Activated CD4-positive, alpha-beta memory T cell treated with anti-CD3 and anti-CD28 coated beads for 36 hours (primary cell): ENCODE measurements at regions of chr19 and their contacts with region 1.

Region 1: GRCh38 chr19:5987077-5987818 is 9.3 kb upstream of the RANBP3 start:
- DNase-seq: peak; percentile 82
- H3K4me3 Mint-ChIP-seq: peak overlapping the region; percentile 67
- H3K27ac Mint-ChIP-seq: no peak overlapping the region
- H3K4me1 Mint-ChIP-seq: peaks cover 30% of the 10 kb centered on the region
- H3K27me3 Mint-ChIP-seq: no peaks in the 10 kb centered on the region

Region 2: GRCh38 chr19:6000228-6000847 is 13.1 kb after region 1 on chr19:
- CTCF ChIA-PET with region 1: interaction called, 18 read pairs
- POLR2A ChIA-PET with region 1: no interaction called
- intact Hi-C with region 1: no loop called
- DNase-seq: no peak
- H3K4me3 Mint-ChIP-seq: no peak overlapping the region
- H3K27ac Mint-ChIP-seq: no peak overlapping the region
- H3K4me1 Mint-ChIP-seq: no peaks in the 10 kb centered on the region
- H3K27me3 Mint-ChIP-seq: no peaks in the 10 kb centered on the region

Region 3: GRCh38 chr19:6021878-6022569 is 34.8 kb after region 1 on chr19:
- CTCF ChIA-PET with region 1: interaction called, 58 read pairs
- POLR2A ChIA-PET with region 1: no interaction called
- intact Hi-C with region 1: loop called (anchors 1 kb)
- DNase-seq: peak; percentile 86
- H3K4me3 Mint-ChIP-seq: no peak overlapping the region
- H3K27ac Mint-ChIP-seq: no peak overlapping the region
- H3K4me1 Mint-ChIP-seq: no peaks in the 10 kb centered on the region
- H3K27me3 Mint-ChIP-seq: peaks cover 8% of the 10 kb centered on the region